Activated naive CD4-positive, alpha-beta T cell treated with anti-CD3 and anti-CD28 coated beads for 36 hours (primary cell): ENCODE measurements at regions of chr12 and their contacts with region 1.

Region 1: DNA sequence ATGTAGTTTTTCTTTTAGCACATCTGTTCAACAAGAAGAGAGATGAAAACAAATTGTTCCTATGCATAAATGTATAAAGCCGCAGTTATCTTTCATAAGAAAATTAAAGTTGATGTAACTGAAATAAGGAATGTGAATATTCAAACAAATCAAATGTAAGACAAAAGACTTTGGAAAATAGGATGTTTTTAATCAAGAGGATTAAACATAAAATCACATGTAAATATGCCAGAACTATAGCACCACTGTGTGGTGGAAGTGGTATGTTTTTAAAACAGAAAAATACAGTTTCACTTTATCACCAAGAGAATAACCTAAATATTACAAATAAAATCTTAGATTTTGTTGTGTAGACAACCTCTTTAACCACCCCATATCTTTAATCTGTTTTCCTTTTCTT is 40.4 kb downstream of the CAPS2 start:
- DNase-seq: no peak
- H3K4me3 Mint-ChIP-seq: no peak overlapping the region
- H3K27ac Mint-ChIP-seq: no peak overlapping the region
- H3K4me1 Mint-ChIP-seq: no peaks in the 10 kb centered on the region
- H3K27me3 Mint-ChIP-seq: no peaks in the 10 kb centered on the region

Region 2: DNA sequence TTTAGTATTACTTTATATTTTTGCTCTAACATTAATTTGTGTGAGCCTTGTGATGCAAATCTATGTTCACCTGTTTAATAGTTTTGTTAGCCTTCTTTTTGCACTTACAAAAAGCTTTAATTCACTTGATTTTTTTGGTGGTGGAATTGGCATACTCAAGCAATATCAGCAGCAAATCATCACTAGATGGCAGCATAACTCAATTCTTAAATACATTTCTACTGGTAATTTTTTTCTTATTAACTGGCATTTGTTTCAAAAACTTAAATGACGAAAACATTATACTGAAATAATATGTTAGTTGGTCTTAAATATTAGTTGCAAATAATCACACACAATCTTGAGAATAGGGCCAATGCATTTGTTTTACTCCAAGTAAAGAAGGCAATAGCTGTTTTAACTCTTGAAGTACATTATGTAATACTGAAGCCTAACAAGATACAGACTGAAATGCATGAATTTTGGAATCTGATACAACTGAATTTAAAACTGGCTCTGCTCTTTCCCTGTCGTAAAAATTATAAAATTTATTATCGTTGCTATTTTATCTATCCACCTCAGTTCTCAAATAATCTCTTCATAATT is 600.6 kb before region 1 on chr12:
- CTCF ChIA-PET with region 1: no interaction called
- intact Hi-C with region 1: loop called (anchors 1 kb)
- DNase-seq: no peak
- H3K4me3 Mint-ChIP-seq: no peak overlapping the region
- H3K27ac Mint-ChIP-seq: no peak overlapping the region
- H3K4me1 Mint-ChIP-seq: no peaks in the 10 kb centered on the region
- H3K27me3 Mint-ChIP-seq: peaks cover 8% of the 10 kb centered on the region

Region 3: GRCh38 chr12:74801625-74802024 is 488.1 kb before region 1 on chr12:
- CTCF ChIA-PET with region 1: no interaction called
- intact Hi-C with region 1: loop called (anchors 1 kb)
- DNase-seq: no peak
- H3K4me3 Mint-ChIP-seq: no peak overlapping the region
- H3K27ac Mint-ChIP-seq: no peak overlapping the region
- H3K4me1 Mint-ChIP-seq: no peaks in the 10 kb centered on the region
- H3K27me3 Mint-ChIP-seq: no peaks in the 10 kb centered on the region

Region 4: GRCh38 chr12:75155969-75156637 is 133.7 kb before region 1 on chr12:
- CTCF ChIA-PET with region 1: no interaction called
- intact Hi-C with region 1: loop called (anchors 5 kb)
- DNase-seq: no peak
- H3K4me3 Mint-ChIP-seq: no peak overlapping the region
- H3K27ac Mint-ChIP-seq: no peak overlapping the region
- H3K4me1 Mint-ChIP-seq: no peaks in the 10 kb centered on the region
- H3K27me3 Mint-ChIP-seq: no peaks in the 10 kb centered on the region